Transverse colon (tissue), 4 donors: ENCODE measurements at regions of chr6 and their contacts with region 1.

Region 1: GRCh38 chr6:36678518-36679027 is at the start of gene CDKN1A:
- DNase-seq: peak; percentile 96
- H3K4me3 ChIP-seq: peak within 1 kb of the TSS; percentile 66 to 84 (median 78)
- H3K27ac ChIP-seq: peak within 1 kb of the TSS; percentile 96 to 98 (median 97)
- H3K4me1 ChIP-seq: peaks cover 22 to 52% (median 46%) of the 10 kb centered on the region in 4 donors
- H3K27me3 ChIP-seq: no peaks in the 10 kb centered on the region
- CTCF ChIP-seq: peak in 1 of 5 experiments; percentile 31
- EP300 ChIP-seq: peak; percentile 61
- POLR2A ChIP-seq: peak; percentile 99
- total RNA-seq, gene CDKN1A: 34.6 to 613 (median 264) TPM

Region 2: GRCh38 chr6:36623547-36624459 is 54.8 kb before region 1 on chr6:
- in situ Hi-C with region 1: loop called in 3 of 4 experiments (anchors 5 kb)
- intact Hi-C with region 1: loop called (anchors 5 kb)
- DNase-seq: peak; percentile 94
- H3K4me3 ChIP-seq: no peak overlapping the region
- H3K27ac ChIP-seq: peak overlapping the region; percentile 69 to 72 (median 70)
- H3K4me1 ChIP-seq: peaks cover 12 to 59% (median 36%) of the 10 kb centered on the region in 4 donors
- H3K27me3 ChIP-seq: no peaks in the 10 kb centered on the region
- CTCF ChIP-seq: peak; percentile 86 to 96 (median 91)
- EP300 ChIP-seq: no peak
- POLR2A ChIP-seq: peak; percentile 86